Calu3 (cell line): ENCODE measurements at regions of chr6 and their contacts with region 1.

Region 1: DNA sequence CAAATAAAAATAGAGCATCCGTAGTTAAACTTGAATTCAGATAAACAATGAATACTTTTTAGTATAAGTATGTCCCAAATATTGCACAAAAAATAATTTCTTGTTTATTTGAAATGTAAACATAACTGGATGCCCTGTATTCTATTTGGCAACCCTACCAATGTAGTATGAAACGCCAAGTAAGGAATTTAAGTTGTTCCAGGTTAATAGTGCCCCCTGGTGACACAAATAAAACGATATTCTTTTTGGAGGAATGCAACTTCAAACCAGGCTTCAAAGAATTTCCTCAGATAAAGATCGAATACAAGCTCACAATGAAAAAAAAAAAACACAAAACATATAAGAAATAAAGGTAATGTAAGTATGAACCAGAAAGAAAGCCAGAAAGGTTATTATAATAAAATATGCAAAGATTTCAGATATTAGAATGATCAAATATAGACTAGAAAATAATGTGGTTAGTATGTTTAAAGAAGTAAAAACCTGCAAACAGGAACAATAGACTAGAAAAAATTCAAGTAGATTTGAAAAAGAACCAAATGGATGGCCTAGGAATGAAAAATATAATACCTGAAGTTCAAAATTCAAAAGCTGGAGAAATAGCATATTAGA is 18.4 kb upstream of the AKAP7 start:
- DNase-seq: peak; percentile 58
- H3K4me3 Mint-ChIP-seq: no peak overlapping the region
- H3K27ac Mint-ChIP-seq: no peak overlapping the region
- H3K4me1 Mint-ChIP-seq: peaks cover 27% of the 10 kb centered on the region
- H3K27me3 Mint-ChIP-seq: no peaks in the 10 kb centered on the region
- CTCF ChIP-seq: peak; percentile 40

Region 2: GRCh38 chr6:131029626-131030297 is 87.1 kb before region 1 on chr6:
- CTCF ChIA-PET with region 1: no interaction called
- intact Hi-C with region 1: loop called (anchors 5 kb)
- DNase-seq: peak; percentile 16
- H3K4me3 Mint-ChIP-seq: peak overlapping the region; percentile 48
- H3K27ac Mint-ChIP-seq: peak overlapping the region; percentile 46
- H3K4me1 Mint-ChIP-seq: peaks cover 68% of the 10 kb centered on the region
- H3K27me3 Mint-ChIP-seq: no peaks in the 10 kb centered on the region
- CTCF ChIP-seq: no peak